ENCODE measurements at regions of chr10 and their contacts with region 1.

Region 1: GRCh38 chr10:115593060-115593459 is 499.9 kb downstream of the ATRNL1 start:
- DNase-seq: no peak
- H3K4me3 ChIP-seq: no peak overlapping the region
- H3K27ac ChIP-seq: no peak overlapping the region
- H3K4me1 ChIP-seq: no peaks in the 10 kb centered on the region
- H3K27me3 ChIP-seq: no peaks in the 10 kb centered on the region
- CTCF ChIP-seq: no peak
- POLR2A ChIP-seq: no peak

Region 2: GRCh38 chr10:115829521-115830205 is 236.6 kb after region 1 on chr10:
- intact Hi-C with region 1: loop called (anchors 10 kb)
- DNase-seq: no peak
- H3K4me3 ChIP-seq: no peak overlapping the region
- H3K27ac ChIP-seq: no peak overlapping the region
- H3K4me1 ChIP-seq: no peaks in the 10 kb centered on the region
- H3K27me3 ChIP-seq: no peaks in the 10 kb centered on the region
- CTCF ChIP-seq: no peak
- POLR2A ChIP-seq: no peak